ENCODE measurements at regions of chr1 and their contacts with region 1.

Region 1: DNA sequence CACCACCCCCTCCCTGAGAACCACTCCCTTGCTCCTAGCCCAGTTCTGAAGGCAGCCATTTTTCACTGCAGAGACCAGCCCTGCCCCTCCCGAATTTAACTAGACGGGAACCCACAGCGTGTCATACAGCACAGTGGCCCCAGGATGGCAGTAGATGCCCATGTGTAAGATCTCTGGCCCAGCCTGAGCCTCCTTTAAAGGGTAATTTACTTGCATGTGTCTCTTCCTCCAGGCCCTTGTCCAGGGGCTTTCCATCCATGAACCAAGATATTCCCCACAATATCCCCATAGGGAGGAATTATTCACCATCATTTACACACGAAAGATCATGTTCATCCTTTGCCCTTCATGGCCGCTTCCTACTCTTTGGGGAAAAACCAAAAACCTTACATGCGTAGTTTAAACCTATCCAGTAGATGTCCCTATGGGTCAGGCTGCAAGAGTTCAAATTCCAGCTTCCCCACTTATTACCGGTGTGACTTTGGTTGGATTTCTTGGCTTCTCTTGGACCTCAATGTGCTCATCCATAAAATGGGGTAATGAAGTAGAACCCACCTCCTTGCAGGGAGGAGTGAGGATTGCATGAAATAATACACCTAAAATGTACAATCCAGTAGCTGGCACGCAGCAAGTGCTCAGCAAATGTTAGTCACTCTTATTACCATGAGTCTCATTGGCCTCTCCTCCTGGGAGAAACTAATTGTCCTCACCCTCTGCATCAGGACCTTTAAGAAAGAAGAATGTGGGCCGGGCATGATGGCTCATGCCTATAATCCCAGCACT is 4.0 kb upstream of the LACTBL1 start:
- DNase-seq: peak; percentile 68
- H3K4me3 ChIP-seq: no peak overlapping the region
- H3K27ac ChIP-seq: no peak overlapping the region
- H3K4me1 ChIP-seq: no peaks in the 10 kb centered on the region
- H3K27me3 ChIP-seq: no peaks in the 10 kb centered on the region
- CTCF ChIP-seq: peak; percentile 15 to 90 (median 69)
- POLR2A ChIP-seq: no peak

Region 2: GRCh38 chr1:22689505-22689904 is 287.1 kb before region 1 on chr1:
- intact Hi-C with region 1: no loop called
- DNase-seq: no peak
- H3K4me3 ChIP-seq: no peak overlapping the region
- H3K27ac ChIP-seq: no peak overlapping the region
- H3K4me1 ChIP-seq: no peaks in the 10 kb centered on the region
- H3K27me3 ChIP-seq: no peaks in the 10 kb centered on the region
- CTCF ChIP-seq: no peak
- POLR2A ChIP-seq: no peak

Region 3: DNA sequence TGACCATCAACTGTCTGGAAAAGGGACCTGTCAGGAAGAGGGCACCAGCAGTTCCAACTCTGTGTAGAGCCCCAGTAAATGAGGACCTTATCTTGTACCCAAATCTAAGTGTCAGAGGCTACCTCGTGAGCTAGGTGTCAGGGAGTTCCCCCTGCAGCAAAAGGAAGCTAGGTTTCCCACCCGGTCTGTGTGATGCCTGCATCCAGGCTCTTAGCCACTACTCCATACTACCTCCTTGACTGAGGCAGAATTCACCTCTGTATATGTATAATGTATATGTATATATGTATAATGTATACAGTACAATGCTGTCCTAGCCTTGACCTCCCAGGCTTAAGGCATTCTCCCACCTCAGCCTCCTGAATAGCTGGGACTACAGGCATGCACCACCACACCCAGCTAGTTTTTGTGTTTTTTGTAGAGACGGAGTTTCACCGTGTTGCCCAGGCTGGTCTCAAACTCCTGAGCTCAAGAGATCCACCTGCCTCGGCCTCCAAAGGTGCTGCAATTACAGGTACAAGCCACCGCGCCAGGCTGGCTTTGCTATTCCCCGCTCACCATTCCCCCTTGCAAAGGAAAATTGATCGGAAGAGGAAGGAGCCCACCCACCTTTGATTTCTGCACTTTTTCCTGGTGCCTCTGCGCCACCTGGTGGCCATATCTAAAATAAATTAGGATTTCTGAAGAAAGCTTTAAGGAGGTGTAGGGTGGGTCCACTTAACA is 207.7 kb after region 1 on chr1:
- intact Hi-C with region 1: loop called (anchors 10 kb)
- DNase-seq: peak; percentile 37
- H3K4me3 ChIP-seq: peak overlapping the region in 1 of 2 donors; percentile 19
- H3K27ac ChIP-seq: no peak overlapping the region
- H3K4me1 ChIP-seq: no peaks in the 10 kb centered on the region
- H3K27me3 ChIP-seq: no peaks in the 10 kb centered on the region
- CTCF ChIP-seq: peak; percentile 83 to 96 (median 90)
- POLR2A ChIP-seq: no peak

Measured in prostate gland (tissue), 2 donors.